Naive thymus-derived CD8-positive, alpha-beta T cell (primary cell): ENCODE measurements at regions of chr16 and their contacts with region 1.

Region 1: GRCh38 chr16:3150346-3151218 is 15.8 kb downstream of the ZNF213 start:
- DNase-seq: peak; percentile 91 to 100 (median 97)
- ATAC-seq: peak; percentile 82 to 83
- H3K4me3 Mint-ChIP-seq: peak overlapping the region; percentile 87 to 94 (median 90)
- H3K27ac Mint-ChIP-seq: peak overlapping the region; percentile 80 to 99 (median 90)
- H3K4me1 Mint-ChIP-seq: peaks cover 19 to 34% (median 29%) of the 10 kb centered on the region in 4 donors
- H3K27me3 Mint-ChIP-seq: peaks cover 0 to 7% (median 0%) of the 10 kb centered on the region in 5 donors

Region 2: GRCh38 chr16:3087243-3088235 is 63.0 kb before region 1 on chr16:
- POLR2A ChIA-PET with region 1: no interaction called
- DNase-seq: no peak
- ATAC-seq: no peak
- H3K4me3 Mint-ChIP-seq: peak overlapping the region in 7 of 10 donors; percentile 6 to 70 (median 49)
- H3K27ac Mint-ChIP-seq: peak overlapping the region in 7 of 10 donors; percentile 41 to 91 (median 61)
- H3K4me1 Mint-ChIP-seq: peaks cover 17 to 54% (median 40%) of the 10 kb centered on the region in 4 donors
- H3K27me3 Mint-ChIP-seq: no peaks in the 10 kb centered on the region

Region 3: DNA sequence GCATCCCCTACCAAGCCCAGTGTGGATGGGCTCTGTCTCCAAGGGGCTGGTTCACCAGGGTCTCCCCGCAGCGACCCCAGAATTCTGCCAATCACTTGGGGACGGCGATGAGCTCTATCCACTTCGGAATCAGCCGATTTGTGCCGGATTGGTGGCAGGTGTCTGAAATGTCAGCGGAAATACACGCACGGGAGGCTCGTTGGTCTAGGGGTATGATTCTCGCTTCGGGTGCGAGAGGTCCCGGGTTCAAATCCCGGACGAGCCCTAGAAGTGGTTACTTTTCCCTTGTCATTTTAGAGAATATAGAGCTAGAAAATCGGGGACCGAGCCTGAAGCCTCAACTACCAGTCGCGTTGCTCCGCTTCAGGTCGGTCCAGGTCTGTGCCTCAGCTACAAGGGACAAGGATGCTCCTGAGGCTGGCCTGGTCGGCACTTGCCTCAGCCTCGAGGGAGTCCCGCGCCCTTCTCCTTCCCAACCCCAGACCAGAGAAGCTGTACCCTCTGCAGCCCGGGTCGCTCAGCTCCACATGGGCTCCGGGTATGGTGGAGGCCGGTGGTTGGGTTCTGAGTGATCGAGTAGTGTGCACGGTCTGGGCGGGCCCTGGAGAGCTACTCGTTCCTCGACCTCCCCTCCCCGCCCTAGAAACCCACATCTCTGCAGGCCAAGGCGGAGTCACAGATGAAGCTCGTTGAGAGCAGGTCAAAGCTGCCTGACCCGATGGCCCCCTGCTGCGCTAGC is 21.4 kb after region 1 on chr16:
- POLR2A ChIA-PET with region 1: interaction called, 23 read pairs
- DNase-seq: peak in 3 of 10 donors; percentile 45 to 51 (median 51)
- ATAC-seq: peak; percentile 3 to 48
- H3K4me3 Mint-ChIP-seq: peak overlapping the region; percentile 74 to 89 (median 84)
- H3K27ac Mint-ChIP-seq: peak overlapping the region in 7 of 10 donors; percentile 12 to 88 (median 58)
- H3K4me1 Mint-ChIP-seq: peaks cover 20 to 38% (median 34%) of the 10 kb centered on the region in 4 donors
- H3K27me3 Mint-ChIP-seq: peaks cover 25 to 52% (median 42%) of the 10 kb centered on the region in 5 donors